Activated naive CD4-positive, alpha-beta T cell treated with anti-CD3 and anti-CD28 coated beads for 36 hours (primary cell): ENCODE measurements at regions of chr2 and their contacts with region 1.

Region 1: DNA sequence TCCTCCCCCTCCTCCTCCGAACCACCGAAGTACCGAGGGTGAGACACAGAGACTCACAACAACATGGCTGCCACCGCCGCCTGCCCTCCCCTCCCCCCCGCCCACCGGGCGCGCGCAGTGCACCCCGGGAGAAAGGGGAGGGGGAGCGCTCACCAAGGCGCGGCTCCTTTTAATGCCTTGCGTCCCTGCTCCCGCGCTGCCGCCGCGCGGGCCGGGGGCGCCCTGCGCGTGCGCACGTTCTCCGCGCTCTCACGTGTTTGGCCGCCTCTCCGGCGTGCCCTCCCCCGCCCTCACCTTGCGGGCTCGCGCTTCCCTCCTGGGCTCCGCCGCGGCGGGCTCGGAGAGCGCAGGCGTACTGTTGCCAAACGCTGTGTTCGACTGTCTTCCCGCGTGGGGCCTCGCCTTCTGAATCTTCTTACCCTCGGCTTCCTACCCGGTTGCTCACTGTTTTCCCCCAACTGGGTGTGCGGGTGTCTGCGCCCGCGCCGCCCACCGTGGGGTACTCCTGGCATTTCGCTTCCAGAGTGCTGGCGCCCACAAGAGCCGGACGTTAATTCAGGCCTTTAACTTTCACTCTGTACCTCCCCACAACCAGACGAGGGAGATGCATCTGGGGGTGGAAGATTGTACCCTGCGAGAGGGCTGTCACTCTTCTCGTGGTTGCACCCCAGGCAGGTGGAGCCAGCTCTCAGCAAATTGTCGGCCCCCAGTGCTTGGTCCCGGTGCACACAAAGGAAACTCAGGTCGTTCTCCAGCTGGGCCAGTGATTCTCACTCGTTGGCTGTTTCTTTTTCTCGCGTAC is at the start of gene PUM2:
- DNase-seq: peak; percentile 94
- H3K4me3 Mint-ChIP-seq: no peak within 1 kb of the TSS
- H3K27ac Mint-ChIP-seq: peak within 1 kb of the TSS; percentile 90
- H3K4me1 Mint-ChIP-seq: peaks cover 28% of the 10 kb centered on the region
- H3K27me3 Mint-ChIP-seq: no peaks in the 10 kb centered on the region
- total RNA-seq, gene PUM2: 88.4 to 96.8 TPM

Region 2: DNA sequence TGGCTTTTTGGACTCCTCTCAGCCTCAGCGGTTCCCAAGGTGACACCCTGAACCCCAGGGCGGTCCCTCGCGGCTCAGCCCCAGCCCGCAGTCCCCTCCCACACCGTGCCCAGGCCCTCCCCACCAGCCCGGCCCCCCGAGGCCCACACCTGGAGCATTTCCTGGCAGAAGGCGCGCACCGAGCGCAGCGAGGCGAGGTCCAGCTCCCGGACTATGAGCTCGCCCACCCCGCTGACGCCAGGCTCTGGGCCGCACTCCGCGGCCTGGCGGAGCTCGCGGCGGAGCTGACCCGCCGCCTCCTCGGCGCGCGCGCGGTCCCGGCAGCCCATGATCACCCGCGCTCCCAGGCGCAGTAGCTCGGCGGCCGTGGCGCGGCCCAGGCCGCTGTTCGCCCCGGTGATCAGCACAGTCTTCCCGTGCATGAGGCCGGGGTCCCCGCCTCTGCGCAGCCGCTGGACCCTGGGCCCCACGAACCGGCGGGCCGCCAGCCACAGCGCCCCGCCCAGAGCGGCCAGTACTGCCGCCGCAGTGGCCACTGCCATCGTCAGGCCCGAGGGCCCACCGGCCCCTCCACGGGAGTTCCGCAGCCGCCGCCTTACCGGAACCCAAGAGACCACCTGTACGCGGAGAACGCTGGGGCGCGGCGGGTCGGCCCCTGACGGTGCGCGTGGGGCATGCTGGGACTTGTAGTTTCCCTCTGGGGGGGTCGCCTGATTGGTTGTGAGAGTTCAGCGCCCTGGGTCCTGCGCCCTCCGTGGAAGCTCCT is 1790.7 kb before region 1 on chr2 and contains the start of gene RDH14:
- CTCF ChIA-PET with region 1: no interaction called
- intact Hi-C with region 1: loop called (anchors 2 kb)
- DNase-seq: peak; percentile 94
- H3K4me3 Mint-ChIP-seq: peak within 1 kb of the TSS; percentile 84
- H3K27ac Mint-ChIP-seq: peak within 1 kb of the TSS; percentile 89
- H3K4me1 Mint-ChIP-seq: peaks cover 35% of the 10 kb centered on the region
- H3K27me3 Mint-ChIP-seq: no peaks in the 10 kb centered on the region
- total RNA-seq, gene RDH14: 11.4 to 11.6 TPM

Region 3: GRCh38 chr2:19901442-19902215 is 449.3 kb before region 1 on chr2 and contains the start of gene TTC32:
- CTCF ChIA-PET with region 1: no interaction called
- intact Hi-C with region 1: loop called (anchors 1 kb)
- DNase-seq: peak; percentile 96
- H3K4me3 Mint-ChIP-seq: peak within 1 kb of the TSS; percentile 81
- H3K27ac Mint-ChIP-seq: peak within 1 kb of the TSS; percentile 99
- H3K4me1 Mint-ChIP-seq: peaks cover 42% of the 10 kb centered on the region
- H3K27me3 Mint-ChIP-seq: peaks cover 10% of the 10 kb centered on the region
- total RNA-seq, gene TTC32: 17.0 to 19.4 TPM

Region 4: DNA sequence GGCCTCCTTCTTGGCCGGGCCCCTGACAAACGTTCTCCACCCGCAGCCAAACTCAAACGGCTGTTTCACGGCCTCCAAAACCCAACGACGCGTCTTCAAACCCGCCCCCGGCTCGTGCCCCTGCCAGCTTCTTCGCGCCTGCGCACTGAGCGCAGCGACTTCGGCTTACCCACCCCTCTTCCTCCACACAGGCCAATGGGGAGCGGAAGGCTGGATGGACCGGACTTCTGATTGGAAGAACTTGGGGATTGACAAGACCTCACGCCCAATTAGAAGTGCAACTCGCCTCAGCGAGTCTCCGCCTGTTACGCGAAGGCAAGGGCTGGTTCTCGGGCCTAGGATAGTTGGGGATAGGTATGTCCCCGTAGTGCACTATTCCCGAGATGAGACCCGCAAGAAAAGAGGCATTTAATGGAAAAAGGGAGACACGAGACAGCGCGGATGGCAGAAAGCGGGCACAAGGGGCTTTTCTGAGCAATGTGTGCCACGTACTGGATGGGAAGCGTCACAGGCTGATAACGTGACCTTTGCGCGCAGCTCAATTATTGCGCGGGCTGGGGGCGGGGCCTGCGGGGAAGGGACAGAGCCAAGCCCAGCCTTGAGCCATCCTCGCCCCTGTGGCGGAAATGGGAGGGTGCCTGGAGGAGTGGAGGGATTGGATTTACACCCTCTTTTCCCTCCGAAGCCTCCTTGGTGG is 299.3 kb before region 1 on chr2 and contains the start of gene LAPTM4A:
- CTCF ChIA-PET with region 1: no interaction called
- intact Hi-C with region 1: loop called (anchors 1 kb)
- DNase-seq: peak; percentile 98
- H3K4me3 Mint-ChIP-seq: no peak within 1 kb of the TSS
- H3K27ac Mint-ChIP-seq: no peak within 1 kb of the TSS
- H3K4me1 Mint-ChIP-seq: peaks cover 25% of the 10 kb centered on the region
- H3K27me3 Mint-ChIP-seq: peaks cover 8% of the 10 kb centered on the region
- total RNA-seq, gene LAPTM4A: 23.4 to 24.4 TPM

Region 5: GRCh38 chr2:20333738-20334137 is 17.2 kb before region 1 on chr2:
- CTCF ChIA-PET with region 1: interaction called, 6 read pairs
- intact Hi-C with region 1: loop called (anchors 2 kb)
- DNase-seq: no peak
- H3K4me3 Mint-ChIP-seq: no peak overlapping the region
- H3K27ac Mint-ChIP-seq: peak overlapping the region; percentile 70
- H3K4me1 Mint-ChIP-seq: peaks cover 79% of the 10 kb centered on the region
- H3K27me3 Mint-ChIP-seq: no peaks in the 10 kb centered on the region

Region 6: DNA sequence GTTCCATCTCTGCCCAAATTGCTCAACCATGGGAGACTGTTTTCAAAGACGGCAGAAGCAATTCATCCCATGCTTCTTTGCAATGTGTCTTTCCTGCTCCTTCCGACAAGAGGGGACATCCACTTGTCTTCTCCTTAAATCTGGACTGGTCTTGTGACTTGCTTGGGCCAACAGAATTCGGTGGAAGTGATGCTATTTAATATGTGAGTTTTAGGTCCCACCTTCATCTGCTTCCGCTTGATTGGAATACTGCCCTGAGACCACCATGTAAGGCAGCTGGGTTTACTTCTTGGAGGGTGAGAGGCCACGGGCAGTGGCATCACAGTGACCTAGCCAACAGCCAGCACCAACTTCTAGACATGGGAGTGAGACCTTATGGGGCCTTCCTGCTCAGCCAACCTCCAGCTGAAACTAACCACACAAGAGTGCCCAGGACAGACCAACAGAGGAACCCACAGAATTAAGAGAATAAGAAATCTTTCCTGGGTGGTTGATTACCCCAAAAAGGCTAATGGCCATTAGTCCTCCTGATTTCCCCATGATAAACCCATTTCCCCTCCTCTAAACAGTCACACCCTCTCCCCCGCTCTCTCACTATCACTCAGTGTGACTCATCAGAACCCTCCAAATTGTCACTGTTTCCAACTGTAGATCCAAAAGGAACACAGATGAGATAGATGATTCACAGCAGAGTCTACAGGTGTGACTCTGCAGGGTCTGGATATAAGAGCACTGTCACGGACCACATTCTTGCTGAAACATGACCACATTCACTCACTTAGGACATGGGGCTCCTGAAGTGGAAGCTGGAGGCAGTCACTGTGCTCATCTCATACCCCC is 79.7 kb after region 1 on chr2:
- CTCF ChIA-PET with region 1: no interaction called
- intact Hi-C with region 1: loop called (anchors 2 kb)
- DNase-seq: peak; percentile 60
- H3K4me3 Mint-ChIP-seq: no peak overlapping the region
- H3K27ac Mint-ChIP-seq: no peak overlapping the region
- H3K4me1 Mint-ChIP-seq: peaks cover 14% of the 10 kb centered on the region
- H3K27me3 Mint-ChIP-seq: no peaks in the 10 kb centered on the region

Region 7: DNA sequence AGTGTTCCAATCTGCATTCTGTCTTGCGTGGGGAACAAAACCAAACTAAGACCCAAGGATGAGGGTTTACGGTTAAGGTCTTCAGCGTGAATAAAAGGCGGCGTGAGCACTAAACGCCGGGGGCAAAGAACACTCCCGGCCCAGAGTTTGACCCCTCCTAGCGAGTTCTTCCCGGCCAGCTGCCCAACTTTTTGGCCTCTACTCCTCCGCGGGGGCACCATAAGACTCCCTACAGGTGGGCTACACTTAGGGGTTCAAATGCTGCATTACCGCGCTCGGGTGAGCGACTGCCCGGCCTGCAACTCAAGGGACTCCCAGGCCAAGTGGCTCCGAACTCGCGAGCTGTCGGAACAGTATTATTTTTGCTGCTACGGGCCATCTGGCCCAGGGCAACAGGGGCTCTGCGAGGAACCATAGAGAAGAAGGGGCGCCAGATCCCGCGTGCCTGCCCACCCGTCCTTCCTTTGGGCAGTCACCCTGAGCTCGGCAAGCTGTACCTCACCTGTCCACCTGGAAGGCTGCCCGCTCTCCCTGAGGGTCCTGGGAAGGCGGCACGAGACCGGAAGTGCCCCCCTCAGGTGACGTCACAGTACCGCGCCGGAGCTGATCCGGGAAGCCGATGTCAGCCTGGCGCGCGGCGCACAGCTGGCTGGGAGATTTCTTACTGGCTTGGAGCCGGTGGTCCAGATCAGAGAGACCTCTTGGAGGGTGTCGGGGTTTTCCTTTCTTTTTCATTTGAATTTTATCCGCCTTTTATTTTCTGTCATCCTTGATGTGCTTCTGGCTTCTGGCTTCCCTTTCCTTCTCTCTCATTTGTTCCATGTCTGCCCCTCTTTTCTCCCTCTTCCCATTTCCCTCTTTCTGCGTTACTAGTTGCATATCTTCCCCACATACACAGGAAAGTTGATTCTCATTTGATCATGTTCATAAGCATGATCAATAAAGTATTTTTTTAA is 471.9 kb after region 1 on chr2 and contains the start of gene LDAH:
- CTCF ChIA-PET with region 1: no interaction called
- intact Hi-C with region 1: loop called (anchors 2 kb)
- DNase-seq: peak; percentile 92
- H3K4me3 Mint-ChIP-seq: peak within 1 kb of the TSS; percentile 96
- H3K27ac Mint-ChIP-seq: peak within 1 kb of the TSS; percentile 97
- H3K4me1 Mint-ChIP-seq: peaks cover 26% of the 10 kb centered on the region
- H3K27me3 Mint-ChIP-seq: no peaks in the 10 kb centered on the region
- total RNA-seq, gene LDAH: 31.1 to 37.6 TPM

Region 8: DNA sequence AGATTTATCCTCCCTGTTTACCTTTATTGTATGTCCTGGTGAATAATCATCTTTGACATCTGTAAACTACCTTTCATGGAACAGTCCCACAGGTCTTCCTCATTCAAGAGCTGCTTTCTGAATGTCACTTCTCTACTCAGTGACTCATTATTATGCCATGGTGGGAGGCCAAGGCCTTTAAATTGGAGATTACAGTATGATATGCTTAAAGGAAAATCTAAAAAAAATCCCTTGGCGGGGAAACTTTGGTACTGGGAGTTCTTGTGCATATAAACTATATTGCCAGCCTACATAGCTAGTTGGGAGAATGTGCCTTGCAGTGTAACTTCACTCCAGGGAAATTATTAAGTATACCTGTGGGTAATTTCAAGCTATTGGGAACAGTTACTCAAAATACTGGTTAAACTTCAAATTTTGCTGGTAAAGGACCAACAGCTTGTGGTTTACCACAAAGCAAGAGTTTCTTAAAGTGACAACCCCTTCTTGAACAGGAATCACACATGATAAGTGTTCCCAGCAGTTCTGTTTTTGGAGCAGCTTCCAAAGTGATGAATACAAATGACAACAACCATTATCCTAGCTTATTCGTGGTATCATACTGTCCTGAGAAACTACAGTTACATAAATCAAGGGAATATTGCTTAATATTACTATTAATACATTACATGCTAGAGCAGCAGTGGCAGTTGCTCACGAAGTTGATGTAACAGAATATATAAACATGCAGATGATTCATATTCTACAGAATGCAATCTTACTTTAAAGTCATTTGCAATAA is 1486.0 kb after region 1 on chr2:
- CTCF ChIA-PET with region 1: no interaction called
- intact Hi-C with region 1: no loop called
- DNase-seq: no peak
- H3K4me3 Mint-ChIP-seq: no peak overlapping the region
- H3K27ac Mint-ChIP-seq: no peak overlapping the region
- H3K4me1 Mint-ChIP-seq: no peaks in the 10 kb centered on the region
- H3K27me3 Mint-ChIP-seq: no peaks in the 10 kb centered on the region